ENCODE measurements at regions of chr11 and their contacts with region 1.

Region 1: DNA sequence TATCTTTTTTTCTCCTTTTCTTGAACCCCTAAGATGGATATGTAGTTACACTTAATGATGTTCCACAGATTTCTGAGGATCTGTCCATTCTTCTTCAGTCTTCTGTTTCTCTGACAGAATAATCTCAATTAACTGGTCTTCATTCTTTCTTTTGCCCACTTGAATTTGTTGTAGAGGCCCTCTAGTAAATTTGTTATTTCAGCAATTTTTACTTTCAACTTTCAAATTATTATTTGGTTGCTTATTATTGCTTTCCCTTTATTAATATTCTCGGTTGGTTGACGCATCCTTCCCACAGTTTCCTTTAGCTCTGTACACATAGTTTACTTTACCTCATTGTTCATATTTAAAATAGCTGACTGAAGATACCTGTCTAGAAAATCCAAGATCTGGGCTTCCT is 1013.7 kb upstream of the CNTN5 start:
- DNase-seq: no peak
- ATAC-seq: no peak
- H3K4me3 ChIP-seq: no peak overlapping the region
- H3K4me3 Mint-ChIP-seq: no peak overlapping the region
- H3K27ac ChIP-seq: no peak overlapping the region
- H3K27ac Mint-ChIP-seq: no peak overlapping the region
- H3K4me1 ChIP-seq: no peaks in the 10 kb centered on the region
- H3K4me1 Mint-ChIP-seq: no peaks in the 10 kb centered on the region
- H3K27me3 ChIP-seq: no peaks in the 10 kb centered on the region
- H3K27me3 Mint-ChIP-seq: no peaks in the 10 kb centered on the region
- CTCF ChIP-seq: no peak

Region 2: DNA sequence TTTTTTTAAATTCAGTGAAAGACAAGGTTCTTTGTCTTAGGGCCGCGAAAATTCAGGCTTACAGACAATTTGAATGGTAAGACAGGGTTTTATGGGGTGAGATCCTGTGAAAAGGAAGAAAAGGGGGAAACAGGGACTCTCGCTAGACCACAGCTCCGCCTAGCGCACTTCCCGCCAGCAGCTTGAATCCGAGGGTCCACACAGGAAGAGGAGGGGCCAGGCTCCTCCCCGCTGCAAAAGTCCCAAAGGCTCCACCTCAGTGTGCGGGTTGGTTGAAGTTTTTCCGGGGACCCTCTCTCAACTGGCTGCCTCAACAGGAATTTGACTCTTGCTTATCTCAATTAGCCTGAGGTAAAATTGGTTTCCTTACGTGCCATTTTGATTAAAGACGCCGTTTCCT is 62.8 kb after region 1 on chr11:
- CTCF ChIA-PET with region 1: no interaction called
- POLR2A ChIA-PET with region 1: no interaction called
- intact Hi-C with region 1: loop called in 1 of 2 experiments (anchors 10 kb)
- DNase-seq: no peak
- ATAC-seq: no peak
- H3K4me3 ChIP-seq: no peak overlapping the region
- H3K4me3 Mint-ChIP-seq: no peak overlapping the region
- H3K27ac ChIP-seq: no peak overlapping the region
- H3K27ac Mint-ChIP-seq: no peak overlapping the region
- H3K4me1 ChIP-seq: no peaks in the 10 kb centered on the region
- H3K4me1 Mint-ChIP-seq: no peaks in the 10 kb centered on the region
- H3K27me3 ChIP-seq: no peaks in the 10 kb centered on the region
- H3K27me3 Mint-ChIP-seq: no peaks in the 10 kb centered on the region
- CTCF ChIP-seq: no peak

Measured in CD4-positive, alpha-beta T cell (primary cell).